Activated T-helper 1 cell treated with anti-CD3 and anti-CD28 coated beads, Interleukin-12 subunit alpha, Interleukin-12 subunit beta, Interleukin-2, Interleukin-4 antibody, amounts not matched to agents 30 ng/mL and 10 ng/mL and 1 ng/mL, durations not matched to agents 14 hours and 24 hours and 36 hours (primary cell): ENCODE measurements at regions of chr6 and their contacts with region 1.

Region 1: GRCh38 chr6:133553652-133554051 is 312.5 kb downstream of the EYA4 start:
- DNase-seq: no peak
- H3K4me3 Mint-ChIP-seq: no peak overlapping the region
- H3K27ac Mint-ChIP-seq: no peak overlapping the region
- H3K4me1 Mint-ChIP-seq: no peaks in the 10 kb centered on the region
- H3K27me3 Mint-ChIP-seq: peaks cover 7% of the 10 kb centered on the region

Region 2: DNA sequence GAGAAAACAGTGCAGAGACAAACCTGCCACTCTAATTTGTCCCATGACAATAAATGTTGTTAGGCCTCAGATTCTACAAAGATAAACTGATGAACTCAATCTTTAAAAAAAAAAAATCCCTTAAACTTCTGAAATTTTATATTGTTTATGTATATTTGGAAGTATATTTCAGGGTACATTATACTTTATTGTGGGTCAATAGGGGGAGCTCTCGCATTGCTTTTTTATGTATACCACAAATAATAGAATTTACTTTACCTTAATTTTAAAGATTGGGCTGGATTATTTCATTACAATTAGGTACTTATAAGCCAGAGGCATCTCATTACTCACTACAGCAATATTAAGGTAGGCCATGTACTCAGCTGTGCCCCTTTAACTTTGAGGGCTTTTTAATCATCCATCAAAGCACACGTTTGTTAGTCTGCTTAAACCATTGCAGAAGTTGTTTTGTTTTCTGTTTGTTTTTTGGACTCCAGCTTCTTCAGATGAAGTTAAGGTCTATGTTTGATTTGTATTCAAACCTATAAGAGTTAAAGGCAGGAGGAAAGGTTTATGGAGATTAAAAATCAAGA is 368.8 kb before region 1 on chr6:
- intact Hi-C with region 1: loop called (anchors 2 kb)
- DNase-seq: no peak
- H3K4me3 Mint-ChIP-seq: no peak overlapping the region
- H3K27ac Mint-ChIP-seq: no peak overlapping the region
- H3K4me1 Mint-ChIP-seq: no peaks in the 10 kb centered on the region
- H3K27me3 Mint-ChIP-seq: peaks cover 1% of the 10 kb centered on the region

Region 3: GRCh38 chr6:133523816-133524215 is 29.8 kb before region 1 on chr6:
- intact Hi-C with region 1: no loop called
- DNase-seq: no peak
- H3K4me3 Mint-ChIP-seq: no peak overlapping the region
- H3K27ac Mint-ChIP-seq: no peak overlapping the region
- H3K4me1 Mint-ChIP-seq: no peaks in the 10 kb centered on the region
- H3K27me3 Mint-ChIP-seq: no peaks in the 10 kb centered on the region